ENCODE measurements at regions of chr11 and their contacts with region 1.

Region 1: DNA sequence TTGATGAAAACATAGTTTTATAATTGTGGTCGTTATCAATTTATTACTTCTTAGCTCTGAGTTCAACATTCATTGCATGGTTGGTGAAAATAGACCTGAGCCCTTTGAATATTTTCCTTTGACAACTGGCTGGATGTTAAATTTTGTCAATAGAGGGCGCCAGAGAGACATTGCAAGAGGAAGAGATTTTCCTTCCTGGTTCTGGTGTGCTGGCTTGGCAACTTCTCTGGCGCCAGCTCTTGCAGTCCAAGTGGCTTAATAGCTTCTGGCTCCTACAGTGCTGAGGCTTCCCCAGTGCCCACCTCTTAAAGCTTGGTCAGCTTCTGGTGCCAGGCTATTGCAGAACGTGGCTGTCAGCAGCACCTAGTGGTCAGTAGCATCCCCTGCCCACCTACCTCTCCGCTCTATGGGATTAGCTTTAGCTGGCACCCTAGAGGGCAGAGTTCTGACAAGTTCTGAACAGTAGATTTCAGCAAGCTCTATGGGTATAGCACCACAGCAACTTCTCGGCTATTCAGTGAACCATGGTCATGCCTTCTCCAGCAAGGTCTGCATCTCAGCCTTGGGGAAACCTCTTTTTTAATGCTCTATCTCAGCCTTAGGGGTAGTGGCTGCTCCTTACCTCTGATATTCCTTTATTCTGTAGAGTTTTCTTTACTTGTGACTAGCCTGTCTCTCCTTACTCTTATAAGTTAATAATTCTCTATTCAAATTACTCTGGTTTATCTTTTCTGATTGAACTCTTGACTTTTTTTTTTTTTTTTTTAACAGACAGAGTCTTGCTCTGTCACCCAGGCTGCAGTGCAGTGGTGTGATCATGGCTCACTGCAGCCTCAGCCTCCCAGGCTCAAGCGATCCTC is 59.4 kb downstream of the ACER3 start:
- DNase-seq: peak; percentile 64
- CTCF ChIP-seq: peak; percentile 79

Region 2: GRCh38 chr11:76799066-76799804 is 120.9 kb before region 1 on chr11:
- CTCF ChIA-PET with region 1: interaction called, 75 read pairs
- POLR2A ChIA-PET with region 1: interaction called, 4 read pairs
- DNase-seq: peak; percentile 90
- CTCF ChIP-seq: peak; percentile 89

Region 3: DNA sequence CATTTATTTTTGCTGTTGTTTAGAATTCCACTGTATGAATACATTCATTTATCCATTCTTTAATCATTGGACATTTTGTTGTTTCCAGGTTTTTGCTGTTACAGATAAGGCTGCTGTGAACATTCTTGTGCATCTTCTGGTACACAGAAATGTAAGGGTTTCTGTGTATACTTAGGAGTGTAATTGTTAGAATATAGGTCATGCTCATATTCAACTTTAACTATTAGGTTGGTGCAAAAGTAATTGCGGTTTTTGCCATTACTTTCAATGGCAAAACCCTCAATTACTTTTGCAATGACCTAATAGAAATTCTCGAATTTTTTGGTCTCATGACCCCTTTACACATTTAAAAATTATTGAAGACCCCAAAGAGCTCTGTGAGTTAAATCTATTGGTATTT is 42.1 kb before region 1 on chr11:
- CTCF ChIA-PET with region 1: interaction called, 14 read pairs
- POLR2A ChIA-PET with region 1: no interaction called
- DNase-seq: no peak
- CTCF ChIP-seq: no peak

Region 4: GRCh38 chr11:76946245-76946644 is 26.1 kb after region 1 on chr11:
- CTCF ChIA-PET with region 1: interaction called, 15 read pairs
- POLR2A ChIA-PET with region 1: no interaction called
- DNase-seq: no peak
- CTCF ChIP-seq: no peak

Region 5: GRCh38 chr11:77039491-77040400 is 119.6 kb after region 1 on chr11:
- CTCF ChIA-PET with region 1: interaction called, 24 read pairs
- POLR2A ChIA-PET with region 1: no interaction called
- DNase-seq: peak; percentile 49
- CTCF ChIP-seq: peak; percentile 58

Region 6: GRCh38 chr11:77147668-77148321 is 227.7 kb after region 1 on chr11:
- CTCF ChIA-PET with region 1: no interaction called
- POLR2A ChIA-PET with region 1: no interaction called
- DNase-seq: no peak
- CTCF ChIP-seq: no peak